PC-9 (cell line): ENCODE measurements at regions of chr1 and their contacts with region 1.

Region 1: GRCh38 chr1:55337801-55338447 is 122.8 kb upstream of the USP24 start:
- DNase-seq: peak in 1 of 2 experiments; percentile 6
- H3K4me3 ChIP-seq: no peak overlapping the region
- H3K27ac ChIP-seq: no peak overlapping the region
- H3K4me1 ChIP-seq: no peaks in the 10 kb centered on the region
- H3K27me3 ChIP-seq: no peaks in the 10 kb centered on the region
- CTCF ChIP-seq: peak; percentile 39; the same call in 1 of the 2 replicates

Region 2: DNA sequence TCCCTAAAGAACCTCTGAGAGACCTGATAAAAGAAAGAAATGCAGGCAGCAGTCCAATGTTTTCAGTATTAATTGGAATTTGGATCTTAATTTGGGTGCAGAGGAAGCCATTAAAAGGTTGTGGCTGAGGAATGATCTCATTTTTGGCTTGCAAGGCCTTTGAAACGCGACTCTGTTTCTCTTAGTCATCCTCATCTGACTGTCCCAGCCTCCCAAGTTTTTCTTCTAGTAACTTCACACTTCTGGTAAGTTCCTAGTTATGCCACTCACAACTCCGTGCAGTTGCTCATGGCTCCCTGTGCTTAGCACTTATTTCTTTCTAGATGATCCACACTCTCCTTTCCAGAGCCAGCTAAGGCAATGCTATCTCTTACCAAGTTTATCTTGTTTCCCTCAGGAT is 24.6 kb after region 1 on chr1:
- CTCF ChIA-PET with region 1: no interaction called
- POLR2A ChIA-PET with region 1: interaction called, 13 read pairs
- intact Hi-C with region 1: no loop called
- DNase-seq: no peak
- H3K4me3 ChIP-seq: no peak overlapping the region
- H3K27ac ChIP-seq: no peak overlapping the region
- H3K4me1 ChIP-seq: no peaks in the 10 kb centered on the region
- H3K27me3 ChIP-seq: no peaks in the 10 kb centered on the region
- CTCF ChIP-seq: no peak

Region 3: GRCh38 chr1:55836086-55836485 is 498.2 kb after region 1 on chr1:
- CTCF ChIA-PET with region 1: interaction called, 12 read pairs
- POLR2A ChIA-PET with region 1: no interaction called
- intact Hi-C with region 1: no loop called
- DNase-seq: no peak
- H3K4me3 ChIP-seq: no peak overlapping the region
- H3K27ac ChIP-seq: no peak overlapping the region
- H3K4me1 ChIP-seq: no peaks in the 10 kb centered on the region
- H3K27me3 ChIP-seq: no peaks in the 10 kb centered on the region
- CTCF ChIP-seq: no peak